Body of pancreas (tissue), 4 donors: ENCODE measurements at regions of chr15 and their contacts with region 1.

Region 1: GRCh38 chr15:68672781-68673205 is 94.0 kb downstream of the CORO2B start:
- DNase-seq: no peak
- ATAC-seq: no peak
- H3K4me3 ChIP-seq: no peak overlapping the region
- H3K27ac ChIP-seq: no peak overlapping the region
- H3K4me1 ChIP-seq: no peaks in the 10 kb centered on the region
- H3K27me3 ChIP-seq: no peaks in the 10 kb centered on the region
- CTCF ChIP-seq: no peak
- POLR2A ChIP-seq: no peak

Region 2: GRCh38 chr15:68550481-68551295 is 122.1 kb before region 1 on chr15:
- intact Hi-C with region 1: loop called (anchors 5 kb)
- DNase-seq: peak; percentile 78 to 89 (median 80)
- ATAC-seq: peak; percentile 63
- H3K4me3 ChIP-seq: no peak overlapping the region
- H3K27ac ChIP-seq: no peak overlapping the region
- H3K4me1 ChIP-seq: no peaks in the 10 kb centered on the region
- H3K27me3 ChIP-seq: peaks cover 0 to 5% of the 10 kb centered on the region in 2 donors
- CTCF ChIP-seq: peak; percentile 74 to 96 (median 79)
- POLR2A ChIP-seq: no peak

Region 3: DNA sequence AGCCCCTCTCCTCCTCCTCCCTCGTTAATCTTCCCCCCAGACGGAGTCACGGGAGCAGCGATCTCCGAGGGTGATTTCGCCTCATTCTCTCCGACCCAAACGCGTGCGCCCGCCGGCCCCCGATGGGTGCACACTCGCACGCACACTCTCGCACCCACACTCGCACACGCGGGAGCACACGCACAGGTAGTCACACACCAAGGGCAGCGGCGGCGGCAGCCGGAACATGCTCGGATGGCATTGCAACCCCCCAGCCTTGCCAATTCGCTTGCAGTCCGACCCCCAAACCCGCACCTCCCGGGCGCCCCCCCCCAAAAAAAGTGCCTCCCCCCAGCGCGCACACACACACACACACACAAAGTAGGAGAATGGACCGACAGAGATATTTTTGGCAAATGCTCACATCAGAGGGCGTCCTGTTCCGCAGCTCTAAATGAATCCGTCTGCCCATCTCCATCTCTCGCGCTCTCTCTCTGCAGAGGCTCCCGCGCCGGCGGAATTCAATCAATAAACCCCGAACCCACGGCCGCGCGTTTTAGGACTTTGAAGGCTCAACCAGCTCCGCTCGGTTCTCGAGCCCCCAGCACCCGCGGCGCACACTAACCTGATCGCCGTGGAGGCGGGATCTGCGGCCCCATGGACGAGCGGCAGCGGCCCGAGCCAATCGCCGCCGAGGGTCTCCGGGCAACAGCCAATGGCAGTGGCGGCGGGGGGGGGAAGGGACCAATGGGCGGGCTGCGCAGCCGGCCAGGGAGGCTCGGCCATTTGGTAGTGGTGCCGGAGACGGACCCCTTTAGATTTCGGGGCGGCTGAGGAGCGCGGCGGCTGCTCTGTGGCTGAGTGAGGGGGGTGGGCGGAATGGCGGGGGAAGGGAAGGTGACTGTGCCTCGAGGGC is 147.7 kb after region 1 on chr15 and contains the start of gene ANP32A:
- intact Hi-C with region 1: no loop called
- DNase-seq: peak; percentile 95 to 97 (median 96)
- ATAC-seq: peak; percentile 79
- H3K4me3 ChIP-seq: peak within 1 kb of the TSS; percentile 81 to 96
- H3K27ac ChIP-seq: peak within 1 kb of the TSS; percentile 89 to 100 (median 99)
- H3K4me1 ChIP-seq: peaks cover 23% of the 10 kb centered on the region
- H3K27me3 ChIP-seq: no peaks in the 10 kb centered on the region
- CTCF ChIP-seq: no peak
- POLR2A ChIP-seq: peak in 2 of 3 donors; percentile 49 to 74
- total RNA-seq, gene ANP32A: 27.7 to 37.4 TPM